Activated CD8-positive, alpha-beta memory T cell treated with anti-CD3 and anti-CD28 coated beads, Interleukin-2, amount 10 ng/mL, durations not matched to agents 7 days and 5 days (primary cell): ENCODE measurements at regions of chr21 and their contacts with region 1.

Region 1: DNA sequence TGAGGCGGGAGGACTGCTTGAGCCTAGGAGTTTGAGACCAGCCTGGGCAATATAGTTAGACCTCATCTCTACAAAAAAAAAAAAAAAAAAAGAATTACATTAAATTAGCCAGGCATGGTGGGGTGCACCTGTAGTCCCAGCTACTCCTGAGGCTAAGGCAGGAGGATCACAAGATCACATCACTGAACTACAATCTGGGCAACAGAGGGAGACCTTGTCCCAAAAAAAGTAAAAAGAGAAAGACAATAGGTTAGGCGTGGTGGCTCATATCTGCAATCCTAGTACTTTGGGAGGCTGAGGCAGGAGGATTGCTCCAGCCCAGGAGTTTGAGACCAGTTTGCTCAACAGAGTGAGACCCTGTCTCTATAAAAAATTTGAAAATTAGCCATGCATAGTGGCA is 130.3 kb downstream of the TIAM1 start:
- DNase-seq: no peak
- ATAC-seq: no peak
- H3K4me3 Mint-ChIP-seq: no peak overlapping the region
- H3K27ac Mint-ChIP-seq: no peak overlapping the region
- H3K4me1 Mint-ChIP-seq: no peaks in the 10 kb centered on the region
- H3K27me3 Mint-ChIP-seq: no peaks in the 10 kb centered on the region

Region 2: DNA sequence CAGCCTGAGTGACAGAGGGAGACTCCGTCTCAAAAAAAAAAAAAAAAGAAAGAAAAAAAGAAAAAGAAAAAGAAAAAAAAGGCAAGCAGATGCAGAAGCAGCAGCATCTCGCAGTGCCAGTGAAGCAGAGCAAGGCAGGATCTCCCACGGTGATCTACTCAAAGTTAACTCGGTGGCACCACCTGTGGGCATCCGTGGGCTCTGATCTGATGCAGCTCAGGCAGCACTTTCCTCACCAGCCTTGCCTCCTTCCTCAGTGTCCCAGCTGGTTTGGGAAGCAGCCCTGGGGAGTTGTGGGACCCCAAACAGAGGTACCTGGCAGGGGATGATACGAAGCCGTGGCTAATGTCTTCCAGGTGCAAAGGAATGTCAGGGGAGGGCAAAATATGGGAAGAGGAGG is 71.2 kb before region 1 on chr21:
- CTCF ChIA-PET with region 1: no interaction called
- DNase-seq: no peak
- ATAC-seq: peak; percentile 58
- H3K4me3 Mint-ChIP-seq: no peak overlapping the region
- H3K27ac Mint-ChIP-seq: no peak overlapping the region
- H3K4me1 Mint-ChIP-seq: peaks cover 2% of the 10 kb centered on the region
- H3K27me3 Mint-ChIP-seq: peaks cover 32% of the 10 kb centered on the region

Region 3: DNA sequence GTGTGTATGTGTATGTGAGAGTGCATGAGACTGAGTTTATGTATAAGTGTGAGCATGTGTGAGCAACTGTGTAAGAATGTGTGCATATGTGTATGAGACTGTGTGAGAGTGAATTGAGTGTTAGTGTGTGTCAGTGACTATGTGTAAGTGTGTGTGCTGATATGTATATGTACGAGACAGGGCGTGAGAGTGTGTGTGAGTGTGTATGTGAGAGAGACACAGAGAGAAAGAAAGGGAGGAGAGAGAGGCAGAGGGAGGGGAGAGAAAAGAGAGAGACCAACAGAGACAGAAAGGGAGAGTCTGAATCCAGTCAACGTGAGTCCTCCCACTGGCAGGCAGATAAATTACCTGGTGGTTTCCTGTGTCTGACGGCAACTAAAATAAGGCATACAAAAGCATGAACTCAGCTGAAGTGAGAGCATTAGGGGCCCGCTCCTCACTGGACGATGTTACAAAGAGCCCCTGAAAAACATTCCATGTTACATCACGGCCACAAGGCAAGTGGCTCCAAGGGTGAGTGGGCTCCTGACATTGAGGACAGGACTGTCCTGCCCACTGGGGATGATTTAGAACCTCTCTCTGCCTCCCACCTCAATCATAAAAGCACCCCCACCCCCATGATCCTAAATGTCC is 196.8 kb after region 1 on chr21:
- CTCF ChIA-PET with region 1: no interaction called
- DNase-seq: no peak
- ATAC-seq: peak; percentile 27
- H3K4me3 Mint-ChIP-seq: no peak overlapping the region
- H3K27ac Mint-ChIP-seq: no peak overlapping the region
- H3K4me1 Mint-ChIP-seq: no peaks in the 10 kb centered on the region
- H3K27me3 Mint-ChIP-seq: peaks cover 5% of the 10 kb centered on the region

Region 4: DNA sequence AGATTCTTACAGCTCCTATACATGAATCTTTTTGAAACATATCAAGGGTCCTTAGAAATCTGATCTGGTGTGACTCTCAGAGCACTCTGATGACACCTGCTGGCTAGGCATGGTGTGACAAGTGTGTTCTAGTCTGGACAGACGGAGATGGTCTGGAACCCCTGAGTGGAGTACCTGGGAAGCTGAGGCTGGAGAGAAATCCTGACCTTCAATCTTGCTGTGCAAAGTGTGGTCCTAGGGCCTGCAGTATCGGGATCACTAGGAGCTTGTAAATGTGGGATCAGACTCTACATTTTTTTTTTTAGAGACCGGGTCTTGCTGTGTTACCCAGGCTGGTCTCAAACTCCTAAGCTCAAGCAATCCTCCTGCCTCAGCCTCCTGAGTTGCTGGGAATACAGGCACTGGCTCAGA is 367.1 kb after region 1 on chr21:
- CTCF ChIA-PET with region 1: interaction called, 15 read pairs
- DNase-seq: peak; percentile 79
- ATAC-seq: peak; percentile 79
- H3K4me3 Mint-ChIP-seq: no peak overlapping the region
- H3K27ac Mint-ChIP-seq: no peak overlapping the region
- H3K4me1 Mint-ChIP-seq: no peaks in the 10 kb centered on the region
- H3K27me3 Mint-ChIP-seq: peaks cover 29% of the 10 kb centered on the region

Region 5: DNA sequence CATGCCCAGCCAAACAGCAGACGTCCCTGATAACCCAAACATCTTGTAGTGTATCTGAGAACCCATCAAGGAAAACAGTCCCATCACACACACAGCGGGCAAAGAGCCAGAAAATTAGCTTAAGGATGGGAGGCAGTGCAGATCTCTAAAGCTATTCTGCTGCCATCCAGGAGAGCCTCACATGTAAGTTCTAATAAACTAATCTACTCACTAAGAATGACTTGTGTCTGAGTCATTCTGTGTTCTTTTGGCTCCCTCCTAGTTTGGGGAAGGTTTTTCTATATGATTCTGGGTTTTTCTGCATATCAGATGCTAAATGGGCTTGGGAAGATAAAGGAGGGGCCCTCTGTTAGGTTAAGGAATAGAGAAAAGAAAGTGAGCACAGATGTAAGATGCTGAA is 821.8 kb after region 1 on chr21:
- CTCF ChIA-PET with region 1: no interaction called
- DNase-seq: no peak
- ATAC-seq: no peak
- H3K4me3 Mint-ChIP-seq: no peak overlapping the region
- H3K27ac Mint-ChIP-seq: no peak overlapping the region
- H3K4me1 Mint-ChIP-seq: no peaks in the 10 kb centered on the region
- H3K27me3 Mint-ChIP-seq: no peaks in the 10 kb centered on the region